ENCODE measurements at regions of chr14 and their contacts with region 1.

Region 1: GRCh38 chr14:24215495-24216344 is at the start of gene MDP1:
- DNase-seq: peak; percentile 86 to 92 (median 88)
- H3K4me3 ChIP-seq: peak within 1 kb of the TSS; percentile 94 to 95
- H3K4me3 Mint-ChIP-seq: peak within 1 kb of the TSS; percentile 90 to 97 (median 93)
- H3K27ac ChIP-seq: peak within 1 kb of the TSS; percentile 100
- H3K27ac Mint-ChIP-seq: peak within 1 kb of the TSS; percentile 95 to 100 (median 99)
- H3K4me1 ChIP-seq: peaks cover 42% of the 10 kb centered on the region
- H3K4me1 Mint-ChIP-seq: peaks cover 30 to 56% (median 44%) of the 10 kb centered on the region in 4 donors
- H3K27me3 ChIP-seq: no peaks in the 10 kb centered on the region
- H3K27me3 Mint-ChIP-seq: no peaks in the 10 kb centered on the region
- total RNA-seq, gene MDP1: 12.5 to 15.3 TPM

Region 2: GRCh38 chr14:24146978-24147760 is 68.6 kb before region 1 on chr14 and contains the start of gene RNF31:
- CTCF ChIA-PET with region 1: interaction called, 4 read pairs
- POLR2A ChIA-PET with region 1: interaction called, 21 read pairs
- intact Hi-C with region 1: loop called (anchors 2 kb)
- DNase-seq: peak; percentile 95 to 99 (median 97)
- H3K4me3 ChIP-seq: peak within 1 kb of the TSS; percentile 85 to 99
- H3K4me3 Mint-ChIP-seq: peak within 1 kb of the TSS; percentile 97 to 100 (median 98)
- H3K27ac ChIP-seq: peak within 1 kb of the TSS; percentile 92
- H3K27ac Mint-ChIP-seq: peak within 1 kb of the TSS; percentile 95 to 99 (median 98)
- H3K4me1 ChIP-seq: peaks cover 63% of the 10 kb centered on the region
- H3K4me1 Mint-ChIP-seq: peaks cover 32 to 80% (median 54%) of the 10 kb centered on the region in 4 donors
- H3K27me3 ChIP-seq: no peaks in the 10 kb centered on the region
- H3K27me3 Mint-ChIP-seq: no peaks in the 10 kb centered on the region
- total RNA-seq, gene RNF31: 108 to 113 TPM

Region 3: GRCh38 chr14:24188251-24189058 is 27.3 kb before region 1 on chr14 and contains the start of gene IPO4:
- CTCF ChIA-PET with region 1: interaction called, 15 read pairs
- POLR2A ChIA-PET with region 1: interaction called, 107 read pairs
- intact Hi-C with region 1: loop called (anchors 1 kb)
- DNase-seq: peak; percentile 92 to 98 (median 95)
- H3K4me3 ChIP-seq: peak within 1 kb of the TSS; percentile 31 to 90
- H3K4me3 Mint-ChIP-seq: peak within 1 kb of the TSS; percentile 90 to 96 (median 93)
- H3K27ac ChIP-seq: peak within 1 kb of the TSS; percentile 80
- H3K27ac Mint-ChIP-seq: peak within 1 kb of the TSS; percentile 93 to 96 (median 96)
- H3K4me1 ChIP-seq: peaks cover 23% of the 10 kb centered on the region
- H3K4me1 Mint-ChIP-seq: peaks cover 20 to 56% (median 36%) of the 10 kb centered on the region in 4 donors
- H3K27me3 ChIP-seq: no peaks in the 10 kb centered on the region
- H3K27me3 Mint-ChIP-seq: no peaks in the 10 kb centered on the region
- total RNA-seq, gene IPO4: 22.4 to 30.2 TPM

Region 4: GRCh38 chr14:24271134-24271833 is 55.6 kb after region 1 on chr14 and contains the start of gene RABGGTA:
- CTCF ChIA-PET with region 1: interaction called, 5 read pairs
- POLR2A ChIA-PET with region 1: interaction called, 43 read pairs
- intact Hi-C with region 1: loop called (anchors 1 kb)
- DNase-seq: peak; percentile 95 to 98 (median 97)
- H3K4me3 ChIP-seq: peak within 1 kb of the TSS; percentile 86 to 91
- H3K4me3 Mint-ChIP-seq: peak within 1 kb of the TSS; percentile 90 to 95 (median 91)
- H3K27ac ChIP-seq: peak within 1 kb of the TSS; percentile 94
- H3K27ac Mint-ChIP-seq: peak within 1 kb of the TSS; percentile 91 to 100 (median 99)
- H3K4me1 ChIP-seq: peaks cover 33% of the 10 kb centered on the region
- H3K4me1 Mint-ChIP-seq: peaks cover 24 to 46% (median 39%) of the 10 kb centered on the region in 4 donors
- H3K27me3 ChIP-seq: no peaks in the 10 kb centered on the region
- H3K27me3 Mint-ChIP-seq: no peaks in the 10 kb centered on the region
- total RNA-seq, gene RABGGTA: 55.6 to 62.5 TPM

Region 5: GRCh38 chr14:24332268-24332993 is 116.7 kb after region 1 on chr14:
- CTCF ChIA-PET with region 1: interaction called, 13 read pairs
- POLR2A ChIA-PET with region 1: interaction called, 4 read pairs
- intact Hi-C with region 1: loop called (anchors 1 kb)
- DNase-seq: peak; percentile 89 to 92 (median 90)
- H3K4me3 ChIP-seq: peak overlapping the region; percentile 24 to 51
- H3K4me3 Mint-ChIP-seq: peak overlapping the region; percentile 76 to 93 (median 87)
- H3K27ac ChIP-seq: no peak overlapping the region
- H3K27ac Mint-ChIP-seq: peak overlapping the region; percentile 65 to 98 (median 86)
- H3K4me1 ChIP-seq: peaks cover 64% of the 10 kb centered on the region
- H3K4me1 Mint-ChIP-seq: peaks cover 40 to 91% (median 59%) of the 10 kb centered on the region in 4 donors
- H3K27me3 ChIP-seq: peaks cover 11% of the 10 kb centered on the region
- H3K27me3 Mint-ChIP-seq: peaks cover 6 to 13% of the 10 kb centered on the region in 2 donors

Measured in CD4-positive, alpha-beta memory T cell (primary cell).